ENCODE measurements at regions of chr7 and their contacts with region 1.

Region 1: GRCh38 chr7:82572195-82572880 is 128.8 kb upstream of the CACNA2D1 start:
- DNase-seq: peak; percentile 86
- ATAC-seq: peak; percentile 91
- H3K4me3 ChIP-seq: no peak overlapping the region; the same call in 1 of the 2 replicates
- H3K27ac ChIP-seq: no peak overlapping the region
- H3K4me1 ChIP-seq: no peaks in the 10 kb centered on the region
- H3K27me3 ChIP-seq: peaks cover 25% of the 10 kb centered on the region
- CTCF ChIP-seq: peak; percentile 90

Region 2: DNA sequence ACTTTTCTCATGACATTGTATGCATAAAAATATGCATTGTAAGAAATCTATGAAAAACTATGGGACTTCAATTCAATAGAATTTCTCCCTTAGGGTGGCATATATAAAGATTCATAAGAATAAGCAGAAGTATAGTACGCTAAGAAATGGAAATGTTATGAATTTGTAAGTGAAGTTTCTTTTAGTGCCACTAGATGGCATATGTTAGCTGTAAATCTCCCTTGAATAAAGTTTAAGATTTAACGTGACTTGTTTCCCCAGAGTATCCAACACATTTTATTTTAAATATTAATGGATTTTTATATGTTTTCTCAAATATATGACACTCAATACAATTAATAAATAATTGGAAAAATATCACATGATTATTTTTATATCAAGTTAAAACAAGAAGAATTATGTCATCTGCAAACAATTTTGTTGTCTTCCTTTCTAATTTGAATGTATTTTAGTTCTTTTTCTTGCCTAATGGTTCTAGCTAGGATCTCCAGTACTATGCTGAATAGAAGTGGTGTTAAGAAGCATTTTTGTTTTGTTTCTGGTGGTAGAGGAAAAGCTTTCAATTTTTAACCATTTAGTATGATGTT is 1089.6 kb before region 1 on chr7:
- CTCF ChIA-PET with region 1: no interaction called
- POLR2A ChIA-PET with region 1: no interaction called
- intact Hi-C with region 1: loop called (anchors 5 kb)
- DNase-seq: peak; percentile 55
- ATAC-seq: peak; percentile 49; the same call in 1 of the 2 replicates
- H3K4me3 ChIP-seq: no peak overlapping the region
- H3K27ac ChIP-seq: no peak overlapping the region
- H3K4me1 ChIP-seq: 0 out of 2 replicates have a peak, but pooled peaks cover 4% of the 10 kb centered on the region
- H3K27me3 ChIP-seq: no peaks in the 10 kb centered on the region
- CTCF ChIP-seq: peak; percentile 70

Region 3: GRCh38 chr7:82172017-82172416 is 400.3 kb before region 1 on chr7:
- CTCF ChIA-PET with region 1: interaction called, 3 read pairs
- POLR2A ChIA-PET with region 1: no interaction called
- intact Hi-C with region 1: loop called (anchors 1 kb)
- DNase-seq: peak; percentile 32
- ATAC-seq: peak; percentile 70
- H3K4me3 ChIP-seq: no peak overlapping the region
- H3K27ac ChIP-seq: no peak overlapping the region
- H3K4me1 ChIP-seq: no peaks in the 10 kb centered on the region
- H3K27me3 ChIP-seq: peaks cover 65% of the 10 kb centered on the region
- CTCF ChIP-seq: peak; percentile 63

Region 4: DNA sequence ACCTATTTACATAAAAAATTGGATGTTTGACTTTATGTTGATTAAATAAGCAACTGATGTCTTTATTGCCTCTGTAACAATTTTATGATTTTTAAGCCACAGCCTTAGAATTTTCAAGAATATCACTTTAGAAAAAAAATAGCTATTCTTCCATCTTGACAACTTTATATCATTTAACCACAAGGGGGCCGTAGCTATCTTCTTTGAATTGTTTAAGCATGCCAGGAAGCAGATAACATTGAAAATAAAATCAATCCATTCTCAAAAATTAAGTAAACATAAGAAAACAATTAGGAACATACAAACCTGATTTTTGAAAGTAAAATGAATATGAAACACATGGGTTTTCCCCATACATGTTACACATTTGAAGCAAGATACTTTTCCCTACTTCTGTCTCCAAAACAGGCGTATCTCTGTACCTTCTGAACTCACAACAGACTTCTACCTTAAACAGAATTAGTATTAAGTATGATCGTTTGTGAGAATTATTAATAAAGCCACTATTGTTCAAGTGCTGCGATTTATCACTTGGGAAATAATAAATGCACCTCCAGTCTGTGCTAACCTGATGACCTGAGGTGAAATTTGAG is 337.8 kb before region 1 on chr7:
- CTCF ChIA-PET with region 1: no interaction called
- POLR2A ChIA-PET with region 1: no interaction called
- intact Hi-C with region 1: loop called (anchors 1 kb)
- DNase-seq: peak; percentile 60
- ATAC-seq: no peak
- H3K4me3 ChIP-seq: no peak overlapping the region
- H3K27ac ChIP-seq: no peak overlapping the region
- H3K4me1 ChIP-seq: no peaks in the 10 kb centered on the region
- H3K27me3 ChIP-seq: peaks cover 37% of the 10 kb centered on the region
- CTCF ChIP-seq: peak; percentile 77

Region 5: GRCh38 chr7:82325416-82325815 is 246.9 kb before region 1 on chr7:
- CTCF ChIA-PET with region 1: no interaction called
- POLR2A ChIA-PET with region 1: no interaction called
- intact Hi-C with region 1: no loop called
- DNase-seq: no peak
- ATAC-seq: no peak
- H3K4me3 ChIP-seq: no peak overlapping the region
- H3K27ac ChIP-seq: no peak overlapping the region
- H3K4me1 ChIP-seq: peaks cover 4% of the 10 kb centered on the region; the same call in 1 of the 2 replicates
- H3K27me3 ChIP-seq: no peaks in the 10 kb centered on the region
- CTCF ChIP-seq: no peak

Region 6: GRCh38 chr7:82481499-82482097 is 90.7 kb before region 1 on chr7:
- CTCF ChIA-PET with region 1: no interaction called
- POLR2A ChIA-PET with region 1: no interaction called
- intact Hi-C with region 1: loop called (anchors 5 kb)
- DNase-seq: peak; percentile 43
- ATAC-seq: no peak
- H3K4me3 ChIP-seq: no peak overlapping the region
- H3K27ac ChIP-seq: no peak overlapping the region
- H3K4me1 ChIP-seq: no peaks in the 10 kb centered on the region
- H3K27me3 ChIP-seq: peaks cover 7% of the 10 kb centered on the region
- CTCF ChIP-seq: peak; percentile 69

Region 7: GRCh38 chr7:82605247-82605872 is 33.0 kb after region 1 on chr7:
- CTCF ChIA-PET with region 1: no interaction called
- POLR2A ChIA-PET with region 1: no interaction called
- intact Hi-C with region 1: loop called (anchors 1 kb)
- DNase-seq: peak; percentile 59
- ATAC-seq: no peak
- H3K4me3 ChIP-seq: no peak overlapping the region
- H3K27ac ChIP-seq: no peak overlapping the region
- H3K4me1 ChIP-seq: no peaks in the 10 kb centered on the region
- H3K27me3 ChIP-seq: no peaks in the 10 kb centered on the region; the same call in 1 of the 2 replicates
- CTCF ChIP-seq: peak; percentile 82

Region 8: GRCh38 chr7:82615527-82615926 is 43.2 kb after region 1 on chr7:
- CTCF ChIA-PET with region 1: interaction called, 11 read pairs
- POLR2A ChIA-PET with region 1: no interaction called
- intact Hi-C with region 1: no loop called
- DNase-seq: no peak
- ATAC-seq: no peak
- H3K4me3 ChIP-seq: no peak overlapping the region
- H3K27ac ChIP-seq: no peak overlapping the region
- H3K4me1 ChIP-seq: no peaks in the 10 kb centered on the region
- H3K27me3 ChIP-seq: peaks cover 3% of the 10 kb centered on the region; the same call in 1 of the 2 replicates
- CTCF ChIP-seq: no peak

Region 9: DNA sequence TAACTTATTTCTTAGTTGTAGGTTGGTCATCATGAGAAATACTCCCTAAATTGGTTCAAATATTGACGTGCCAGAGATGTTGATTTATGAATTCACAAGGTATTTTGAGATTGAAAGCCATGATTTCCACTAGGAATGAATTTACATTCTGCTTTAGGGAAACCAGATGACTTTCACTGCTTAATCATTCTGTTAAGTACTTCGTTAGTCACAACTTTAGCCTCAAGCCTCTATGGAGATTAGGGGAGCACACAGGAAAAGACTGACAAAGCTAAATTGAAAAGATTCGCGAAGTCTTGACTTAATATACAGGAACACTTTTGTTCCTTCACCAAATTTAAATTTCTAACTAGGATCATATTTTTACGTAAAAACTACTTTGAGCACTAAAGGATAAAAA is 121.7 kb after region 1 on chr7:
- CTCF ChIA-PET with region 1: no interaction called
- POLR2A ChIA-PET with region 1: no interaction called
- intact Hi-C with region 1: no loop called
- DNase-seq: no peak
- ATAC-seq: no peak
- H3K4me3 ChIP-seq: no peak overlapping the region
- H3K27ac ChIP-seq: no peak overlapping the region
- H3K4me1 ChIP-seq: no peaks in the 10 kb centered on the region
- H3K27me3 ChIP-seq: no peaks in the 10 kb centered on the region
- CTCF ChIP-seq: no peak

Measured in PC-3 (cell line).